ENCODE measurements at regions of chr20 and their contacts with region 1.

Region 1: GRCh38 chr20:41317536-41318270 is at the start of gene ZHX3:
- DNase-seq: peak; percentile 95
- H3K4me3 ChIP-seq: peak within 1 kb of the TSS; percentile 79 to 94 (median 79)
- H3K27ac ChIP-seq: peak within 1 kb of the TSS; percentile 92
- H3K4me1 ChIP-seq: peaks cover 16% of the 10 kb centered on the region
- H3K27me3 ChIP-seq: no peaks in the 10 kb centered on the region
- CTCF ChIP-seq: no peak
- total RNA-seq, gene ZHX3: 27.0 to 39.7 TPM

Region 2: GRCh38 chr20:41287327-41287726 is 30.4 kb before region 1 on chr20:
- CTCF ChIA-PET with region 1: no interaction called
- dilution Hi-C with region 1: no loop called
- in situ Hi-C with region 1: no loop called
- intact Hi-C with region 1: loop called (anchors 2 kb)
- DNase-seq: peak; percentile 82
- H3K4me3 ChIP-seq: no peak overlapping the region
- H3K27ac ChIP-seq: peak overlapping the region; percentile 29
- H3K4me1 ChIP-seq: peaks cover 4% of the 10 kb centered on the region
- H3K27me3 ChIP-seq: no peaks in the 10 kb centered on the region
- CTCF ChIP-seq: no peak

Region 3: DNA sequence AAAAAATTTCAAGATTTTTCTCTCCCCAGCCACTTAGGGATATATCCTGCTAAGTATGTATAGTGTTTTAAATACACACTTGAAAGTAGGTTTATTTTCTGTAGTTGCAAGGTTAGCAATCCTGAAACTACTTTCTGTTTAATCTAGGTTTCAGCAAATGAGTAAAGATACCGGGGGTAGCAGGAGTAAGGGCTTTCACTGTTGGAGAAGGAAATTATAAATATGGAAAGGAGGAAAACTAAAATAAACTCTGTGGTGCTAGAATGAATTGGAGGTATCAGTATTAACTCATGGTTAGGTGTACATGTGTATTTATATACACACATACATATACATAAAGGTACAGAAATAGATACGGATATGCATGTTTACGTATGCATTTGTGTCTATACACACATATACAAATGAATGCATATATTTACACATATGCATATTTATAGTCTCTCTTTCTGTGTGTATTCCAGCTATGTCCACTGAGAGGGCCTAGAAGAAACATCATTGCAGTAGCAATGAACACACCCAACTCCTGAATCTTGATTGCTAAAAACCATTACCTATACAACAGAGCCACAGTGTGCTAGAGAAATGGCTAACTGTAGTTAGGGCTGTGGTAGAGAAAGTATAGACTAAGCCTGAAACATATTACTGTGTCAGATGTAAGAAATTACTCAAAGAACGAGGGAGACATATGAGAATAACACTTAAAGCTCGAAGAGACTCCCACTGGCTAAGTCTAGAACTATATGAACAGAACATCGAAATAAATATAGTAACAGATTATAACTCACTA is 144.9 kb after region 1 on chr20:
- CTCF ChIA-PET with region 1: no interaction called
- dilution Hi-C with region 1: no loop called
- in situ Hi-C with region 1: no loop called
- intact Hi-C with region 1: no loop called
- DNase-seq: no peak
- H3K4me3 ChIP-seq: no peak overlapping the region
- H3K27ac ChIP-seq: no peak overlapping the region
- H3K4me1 ChIP-seq: no peaks in the 10 kb centered on the region
- H3K27me3 ChIP-seq: no peaks in the 10 kb centered on the region
- CTCF ChIP-seq: no peak

Region 4: GRCh38 chr20:41617931-41618806 is 300.5 kb after region 1 on chr20 and contains the start of gene CHD6:
- CTCF ChIA-PET with region 1: no interaction called
- dilution Hi-C with region 1: no loop called
- in situ Hi-C with region 1: no loop called
- intact Hi-C with region 1: no loop called
- DNase-seq: peak; percentile 99
- H3K4me3 ChIP-seq: peak within 1 kb of the TSS; percentile 71 to 91 (median 74)
- H3K27ac ChIP-seq: peak within 1 kb of the TSS; percentile 71
- H3K4me1 ChIP-seq: peaks cover 12% of the 10 kb centered on the region
- H3K27me3 ChIP-seq: no peaks in the 10 kb centered on the region
- CTCF ChIP-seq: no peak
- total RNA-seq, gene CHD6: 27.0 to 28.2 TPM